ENCODE measurements at regions of chr6 and their contacts with region 1.

Region 1: DNA sequence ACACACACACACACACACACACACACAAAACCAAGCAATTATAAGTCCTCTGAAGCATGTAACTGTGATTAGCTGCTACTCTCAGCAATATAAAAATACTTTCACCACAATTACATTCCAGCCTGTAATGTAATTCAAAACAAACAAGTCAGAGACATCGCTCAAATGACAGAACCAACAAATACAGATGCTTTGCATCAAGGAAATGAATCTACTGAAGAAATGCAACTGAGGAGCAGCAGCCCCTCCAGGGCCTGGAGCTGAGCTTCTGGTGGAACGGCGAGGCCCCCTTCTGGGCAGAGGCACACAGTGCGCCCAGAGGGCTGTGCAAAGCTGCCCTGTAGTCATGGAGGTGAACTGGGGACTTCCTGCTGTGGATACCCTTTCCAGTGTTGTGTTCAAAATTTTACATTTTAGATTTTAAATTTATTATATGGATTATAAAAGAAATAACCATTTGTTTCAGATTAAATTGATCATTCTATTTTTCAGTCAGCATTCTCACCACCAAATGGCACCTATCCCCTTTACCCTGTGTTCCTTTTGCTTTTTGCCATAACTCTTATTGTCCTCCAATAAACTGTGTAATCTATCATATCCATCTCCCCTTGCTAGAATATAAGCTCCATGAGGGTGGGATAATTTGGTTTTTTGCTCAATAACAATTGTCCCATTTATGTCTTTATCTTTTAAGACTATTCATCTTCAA is 23.2 kb downstream of the ADAT2 start:
- DNase-seq: peak; percentile 32
- ATAC-seq: peak; percentile 100
- H3K4me3 ChIP-seq: no peak overlapping the region
- H3K27ac ChIP-seq: no peak overlapping the region
- H3K4me1 ChIP-seq: no peaks in the 10 kb centered on the region
- H3K27me3 ChIP-seq: no peaks in the 10 kb centered on the region
- CTCF ChIP-seq: peak; percentile 92

Region 2: GRCh38 chr6:142474531-142475289 is 952.6 kb before region 1 on chr6:
- CTCF ChIA-PET with region 1: no interaction called
- POLR2A ChIA-PET with region 1: no interaction called
- in situ Hi-C with region 1: no loop called
- intact Hi-C with region 1: loop called (anchors 10 kb)
- DNase-seq: peak; percentile 54
- ATAC-seq: peak; percentile 97
- H3K4me3 ChIP-seq: no peak overlapping the region
- H3K27ac ChIP-seq: no peak overlapping the region
- H3K4me1 ChIP-seq: peaks cover 3% of the 10 kb centered on the region; the same call in 1 of the 2 replicates
- H3K27me3 ChIP-seq: no peaks in the 10 kb centered on the region
- CTCF ChIP-seq: peak; percentile 82

Region 3: DNA sequence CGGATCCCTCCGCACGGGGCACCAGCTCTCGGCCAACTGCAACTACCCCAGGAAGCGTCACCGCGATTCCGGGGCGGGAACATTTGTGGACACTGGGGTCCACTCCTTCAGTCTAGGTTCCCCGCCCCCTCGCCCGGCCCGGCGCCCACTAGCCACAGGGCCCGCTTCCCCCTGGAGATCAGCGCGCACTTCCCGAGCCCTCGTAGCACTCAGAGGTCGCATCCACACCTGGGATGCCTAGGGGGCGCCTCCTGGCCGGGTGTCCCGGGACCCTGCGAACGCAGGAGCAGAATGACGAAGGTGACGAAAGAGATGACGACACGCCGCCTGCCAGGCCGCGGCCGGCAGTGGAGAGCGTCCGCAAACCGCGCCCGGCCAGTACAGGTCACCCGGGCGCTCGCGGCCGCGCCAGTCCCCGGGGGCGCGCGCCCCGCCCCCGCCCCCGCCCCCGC is 366.9 kb before region 1 on chr6:
- CTCF ChIA-PET with region 1: no interaction called
- POLR2A ChIA-PET with region 1: no interaction called
- in situ Hi-C with region 1: no loop called
- intact Hi-C with region 1: loop called (anchors 10 kb)
- DNase-seq: no peak
- ATAC-seq: peak; percentile 97
- H3K4me3 ChIP-seq: peak overlapping the region; percentile 80 to 81
- H3K27ac ChIP-seq: peak overlapping the region; percentile 64
- H3K4me1 ChIP-seq: peaks cover 7% of the 10 kb centered on the region
- H3K27me3 ChIP-seq: no peaks in the 10 kb centered on the region
- CTCF ChIP-seq: peak; percentile 30

Region 4: DNA sequence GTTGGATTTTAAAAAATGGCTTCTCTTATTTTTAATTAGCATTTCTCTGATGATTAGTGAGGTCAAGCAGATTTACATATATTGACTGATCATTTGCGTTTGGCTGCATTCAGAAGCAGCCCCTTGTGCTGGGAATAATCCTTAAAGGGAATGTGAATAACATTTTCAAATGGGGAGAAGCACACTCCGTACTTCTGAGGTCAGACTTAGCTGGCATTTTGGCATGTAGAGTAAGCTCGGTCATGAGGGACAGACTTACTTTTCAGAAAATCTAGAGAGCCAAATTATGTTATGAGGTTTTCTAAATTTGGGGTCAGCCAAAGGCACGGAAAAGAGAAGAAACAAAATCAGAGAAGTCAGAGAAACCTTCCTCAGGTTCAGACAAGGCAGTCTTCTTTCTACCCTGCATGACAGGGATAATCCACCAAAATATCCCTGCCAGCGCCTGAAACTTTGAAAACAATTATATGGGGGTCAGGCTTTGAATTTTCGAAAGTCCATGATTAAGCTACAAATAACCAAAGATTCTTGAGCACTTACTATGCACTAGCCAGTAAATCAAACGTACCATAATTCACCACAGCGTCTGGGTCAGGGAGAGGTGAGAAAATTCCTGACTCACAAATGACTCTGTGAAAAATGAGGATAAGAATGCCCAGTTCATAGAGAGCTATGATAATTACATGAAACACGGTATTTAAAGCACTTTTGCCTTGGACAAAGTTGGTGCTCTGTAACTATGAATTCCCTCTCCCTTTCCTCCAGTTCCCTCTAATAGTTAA is 21.7 kb before region 1 on chr6:
- CTCF ChIA-PET with region 1: no interaction called
- POLR2A ChIA-PET with region 1: no interaction called
- in situ Hi-C with region 1: no loop called
- intact Hi-C with region 1: no loop called
- DNase-seq: no peak
- ATAC-seq: no peak
- H3K4me3 ChIP-seq: no peak overlapping the region
- H3K27ac ChIP-seq: no peak overlapping the region
- H3K4me1 ChIP-seq: no peaks in the 10 kb centered on the region
- H3K27me3 ChIP-seq: no peaks in the 10 kb centered on the region
- CTCF ChIP-seq: no peak

Measured in Panc1 (cell line).